PC-3 (cell line): ENCODE measurements at regions of chr1 and their contacts with region 1.

Region 1: GRCh38 chr1:211830330-211831142 is at the start of gene LPGAT1:
- DNase-seq: peak; percentile 79
- ATAC-seq: peak; percentile 91
- H3K4me3 ChIP-seq: peak within 1 kb of the TSS; percentile 84
- H3K27ac ChIP-seq: no peak within 1 kb of the TSS
- H3K4me1 ChIP-seq: peaks cover 13% of the 10 kb centered on the region; the same call in 1 of the 2 replicates
- H3K27me3 ChIP-seq: no peaks in the 10 kb centered on the region
- CTCF ChIP-seq: peak; percentile 69
- total RNA-seq, gene LPGAT1: 39.8 and 41.7 TPM in 2 replicates

Region 2: DNA sequence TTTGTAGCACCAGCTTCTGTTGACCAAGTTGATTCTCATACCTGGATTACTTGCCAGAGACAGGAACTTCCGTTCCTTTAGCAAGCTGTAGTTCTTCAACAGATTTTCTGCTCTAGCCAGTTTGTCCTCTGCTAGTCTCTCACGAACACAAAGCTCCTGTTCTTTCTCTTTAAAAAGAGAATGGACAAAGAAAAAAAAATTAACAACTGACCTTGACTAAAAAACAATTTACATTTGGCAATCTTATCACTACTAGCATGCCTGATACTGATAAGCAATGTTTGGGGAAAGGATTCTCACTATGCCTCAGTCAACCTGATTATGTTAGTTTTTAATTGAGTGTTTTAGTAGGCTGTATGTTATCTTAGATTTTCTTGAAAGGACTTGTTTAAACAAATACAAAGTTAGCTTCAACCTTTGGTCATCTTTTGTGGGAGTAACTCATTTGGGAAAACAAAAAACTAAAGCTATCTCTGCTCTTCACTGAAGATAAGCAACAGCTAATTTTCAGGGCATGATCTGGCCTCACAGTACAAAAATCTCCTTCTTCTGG is 163.4 kb before region 1 on chr1:
- CTCF ChIA-PET with region 1: no interaction called
- POLR2A ChIA-PET with region 1: no interaction called
- intact Hi-C with region 1: no loop called
- DNase-seq: no peak
- ATAC-seq: no peak
- H3K4me3 ChIP-seq: no peak overlapping the region
- H3K27ac ChIP-seq: no peak overlapping the region
- H3K4me1 ChIP-seq: peaks cover 2% of the 10 kb centered on the region; the same call in 1 of the 2 replicates
- H3K27me3 ChIP-seq: no peaks in the 10 kb centered on the region
- CTCF ChIP-seq: no peak

Region 3: DNA sequence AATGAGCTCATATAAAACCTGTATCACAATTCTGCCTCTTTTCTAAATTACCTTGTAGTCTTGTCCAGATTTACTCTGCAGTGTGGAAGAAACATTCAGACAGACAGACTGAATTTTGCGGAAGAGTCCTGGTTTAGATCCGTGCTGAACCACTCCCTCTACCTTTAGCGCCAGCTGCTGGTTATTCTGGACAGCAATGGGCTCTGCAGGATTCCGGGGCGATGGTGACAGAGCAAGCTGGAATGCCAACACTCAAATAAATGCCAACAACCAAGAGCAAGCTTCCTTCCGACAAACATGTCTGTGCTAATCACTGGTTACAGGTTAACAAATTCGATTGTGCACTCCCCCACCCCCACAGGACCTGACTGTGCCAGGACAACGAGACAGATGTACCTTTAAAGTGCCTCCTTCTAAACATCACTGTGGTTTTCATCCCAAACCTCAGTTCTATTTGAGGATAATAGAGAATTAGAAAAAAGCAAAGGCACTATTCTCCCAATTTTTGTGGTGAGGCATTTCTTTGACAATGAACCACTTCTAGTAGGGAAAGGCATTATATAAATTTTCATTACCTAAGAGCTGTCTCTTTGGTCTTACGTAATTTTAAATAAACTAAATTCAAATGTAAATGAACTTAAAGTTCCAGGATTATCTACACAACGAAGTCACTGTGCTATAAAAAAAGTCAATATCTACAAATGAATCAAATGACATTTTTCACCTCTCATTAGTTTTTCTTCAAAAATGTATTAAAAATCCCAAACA is 114.4 kb after region 1 on chr1:
- CTCF ChIA-PET with region 1: no interaction called
- POLR2A ChIA-PET with region 1: no interaction called
- intact Hi-C with region 1: loop called (anchors 1 kb)
- DNase-seq: peak; percentile 95
- ATAC-seq: peak; percentile 100
- H3K4me3 ChIP-seq: no peak overlapping the region
- H3K27ac ChIP-seq: no peak overlapping the region
- H3K4me1 ChIP-seq: peaks cover 10% of the 10 kb centered on the region
- H3K27me3 ChIP-seq: no peaks in the 10 kb centered on the region
- CTCF ChIP-seq: peak; percentile 99